ENCODE measurements at regions of chr20 and their contacts with region 1.

Region 1: DNA sequence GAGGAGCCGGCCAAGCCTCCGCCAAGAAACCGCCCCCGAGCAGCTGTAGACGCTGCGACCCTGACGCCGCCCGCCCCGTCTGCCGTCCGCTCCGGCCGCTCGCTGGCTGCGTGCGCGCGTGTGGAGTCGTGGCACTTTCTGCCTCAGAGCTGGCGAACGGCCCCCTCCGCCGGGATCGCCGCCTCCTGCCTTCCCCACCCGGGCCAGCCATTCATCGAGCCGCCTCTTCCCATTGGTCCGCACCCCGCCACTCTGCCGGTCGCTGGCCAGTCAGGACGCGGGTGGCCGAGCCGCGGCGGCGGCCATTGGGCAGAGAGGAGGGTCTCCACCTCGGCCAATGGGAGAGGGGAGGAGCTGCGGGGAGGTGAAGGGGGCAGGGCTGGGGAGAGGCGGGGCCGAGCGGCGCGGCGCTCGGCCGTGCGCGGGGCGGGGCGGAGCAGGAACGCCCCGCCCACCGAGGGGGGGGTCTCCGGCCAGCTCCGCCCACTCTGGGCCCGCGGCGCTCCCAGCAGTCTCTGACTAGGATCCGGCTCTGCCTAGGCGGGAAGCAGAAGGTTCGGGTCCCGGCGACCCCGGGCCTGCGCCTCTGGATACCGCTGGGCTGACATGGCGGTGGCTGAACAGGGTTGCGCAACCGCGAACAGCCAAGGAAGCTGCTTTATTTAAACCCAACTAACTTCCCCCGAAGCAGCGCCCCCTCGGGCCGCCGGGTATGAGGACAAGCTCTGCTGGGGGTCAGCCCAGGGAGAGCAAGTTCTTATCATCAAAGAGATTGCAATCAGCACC is at the start of gene RRBP1:
- DNase-seq: peak; percentile 97
- H3K4me3 Mint-ChIP-seq: peak within 1 kb of the TSS; percentile 81
- H3K27ac Mint-ChIP-seq: peak within 1 kb of the TSS; percentile 47
- H3K4me1 Mint-ChIP-seq: peaks cover 15% of the 10 kb centered on the region
- H3K27me3 Mint-ChIP-seq: peaks cover 19% of the 10 kb centered on the region
- total RNA-seq, gene RRBP1: 19.6 to 20.0 TPM

Region 2: GRCh38 chr20:17377231-17377630 is 305.1 kb before region 1 on chr20:
- CTCF ChIA-PET with region 1: no interaction called
- intact Hi-C with region 1: no loop called
- DNase-seq: no peak
- H3K4me3 Mint-ChIP-seq: no peak overlapping the region
- H3K27ac Mint-ChIP-seq: no peak overlapping the region
- H3K4me1 Mint-ChIP-seq: no peaks in the 10 kb centered on the region
- H3K27me3 Mint-ChIP-seq: no peaks in the 10 kb centered on the region

Region 3: DNA sequence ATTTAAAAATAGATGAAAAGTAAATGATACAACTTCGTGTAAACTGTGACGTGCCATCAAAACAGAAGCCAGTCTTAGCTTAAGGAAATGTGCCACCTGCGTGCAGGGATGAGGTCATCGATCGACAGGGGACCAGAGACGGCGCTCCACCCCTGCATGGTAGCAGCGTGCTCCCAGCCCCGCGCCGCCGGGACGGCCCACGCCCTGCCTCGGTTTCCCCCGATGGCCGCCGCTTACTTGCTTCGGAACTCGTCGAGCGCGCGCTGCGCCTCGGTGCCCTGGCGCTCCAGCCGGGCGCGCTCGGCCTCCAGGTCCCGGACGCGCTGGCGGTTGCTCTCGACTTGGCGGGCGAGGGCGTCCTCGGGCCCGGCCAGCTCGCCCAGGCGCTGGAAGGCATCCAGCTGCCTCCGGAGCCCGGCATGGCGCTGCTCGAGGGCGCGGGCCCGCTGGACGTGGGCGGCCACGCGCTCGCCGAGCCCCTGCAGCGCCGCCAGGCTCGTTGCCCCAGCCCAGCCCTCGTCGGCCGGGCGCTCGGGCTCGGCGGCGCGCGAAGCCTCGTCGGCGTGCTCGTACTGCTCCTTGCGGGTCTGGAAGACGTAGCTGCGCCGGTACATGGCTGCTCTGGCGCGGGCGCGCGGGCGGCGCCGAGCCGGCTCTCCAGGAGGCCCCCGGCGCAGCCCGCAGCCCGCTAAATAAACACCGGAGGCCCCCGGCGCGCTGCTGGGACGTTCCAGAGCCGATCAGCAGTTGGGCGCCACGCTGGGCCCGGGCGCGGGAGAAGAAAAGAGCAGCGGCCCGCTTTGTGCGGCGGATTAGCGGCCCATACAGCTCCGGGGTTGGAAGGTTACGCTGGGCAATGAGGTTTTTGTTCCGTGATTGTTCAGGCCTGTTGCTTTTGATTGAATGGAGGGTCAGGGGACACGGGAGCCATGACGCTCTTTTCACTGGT is 151.3 kb before region 1 on chr20 and contains the start of gene BFSP1:
- CTCF ChIA-PET with region 1: interaction called, 6 read pairs
- intact Hi-C with region 1: loop called (anchors 2 kb)
- DNase-seq: peak; percentile 69
- H3K4me3 Mint-ChIP-seq: peak within 1 kb of the TSS; percentile 85
- H3K27ac Mint-ChIP-seq: no peak within 1 kb of the TSS
- H3K4me1 Mint-ChIP-seq: peaks cover 9% of the 10 kb centered on the region
- H3K27me3 Mint-ChIP-seq: peaks cover 17% of the 10 kb centered on the region
- total RNA-seq, gene BFSP1: 0.19 TPM in 1 of 2 experiments, not detected in the other

Region 4: DNA sequence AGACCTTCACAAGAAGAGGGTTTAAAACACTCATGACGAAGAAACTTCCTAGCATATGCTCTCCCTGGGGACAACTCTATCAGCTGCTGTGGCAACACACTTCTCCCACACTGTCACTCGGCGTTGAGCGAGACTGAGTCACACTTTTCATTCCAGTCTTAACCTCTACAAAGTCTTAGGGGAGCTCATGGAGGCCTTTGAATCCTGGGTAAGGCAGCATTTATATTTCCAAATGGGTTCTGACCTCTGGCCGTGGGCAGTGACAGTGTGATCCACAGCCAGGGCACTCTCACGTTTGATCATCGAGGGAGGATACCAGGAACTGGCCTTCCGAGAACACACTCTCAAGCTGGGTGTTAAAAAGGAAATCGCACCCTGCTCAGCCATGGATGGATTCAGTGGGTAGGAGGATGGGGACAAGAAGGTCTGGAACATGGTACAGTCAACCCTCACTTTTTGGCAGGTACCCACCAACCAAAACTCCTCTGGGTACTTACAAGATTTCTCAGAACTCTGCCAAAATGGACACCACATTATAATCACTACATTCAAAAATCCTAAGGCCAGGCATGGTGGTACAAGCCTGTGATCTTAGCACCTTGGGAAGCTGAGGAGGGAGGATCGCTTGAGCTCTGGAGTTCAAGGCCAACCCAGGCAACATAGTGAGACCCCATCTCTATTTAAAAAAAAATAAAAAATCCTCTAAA is 19.8 kb before region 1 on chr20:
- CTCF ChIA-PET with region 1: interaction called, 10 read pairs
- intact Hi-C with region 1: no loop called
- DNase-seq: no peak
- H3K4me3 Mint-ChIP-seq: no peak overlapping the region
- H3K27ac Mint-ChIP-seq: peak overlapping the region; percentile 47
- H3K4me1 Mint-ChIP-seq: peaks cover 34% of the 10 kb centered on the region
- H3K27me3 Mint-ChIP-seq: no peaks in the 10 kb centered on the region

Region 5: GRCh38 chr20:18137412-18138265 is 455.3 kb after region 1 on chr20 and contains the starts of genes KAT14 and PET117:
- CTCF ChIA-PET with region 1: no interaction called
- intact Hi-C with region 1: loop called (anchors 1 kb)
- DNase-seq: peak; percentile 91
- H3K4me3 Mint-ChIP-seq: peak within 1 kb of the TSS; percentile 75
- H3K27ac Mint-ChIP-seq: peak within 1 kb of the TSS; percentile 77
- H3K4me1 Mint-ChIP-seq: peaks cover 30% of the 10 kb centered on the region
- H3K27me3 Mint-ChIP-seq: no peaks in the 10 kb centered on the region
- total RNA-seq, gene KAT14: 10.3 to 12.9 TPM
- total RNA-seq, gene PET117: 16.7 to 17.9 TPM

Region 6: GRCh38 chr20:18566892-18567742 is 884.8 kb after region 1 on chr20 and contains the start of gene SMIM26:
- CTCF ChIA-PET with region 1: no interaction called
- intact Hi-C with region 1: loop called (anchors 5 kb)
- DNase-seq: peak; percentile 95
- H3K4me3 Mint-ChIP-seq: peak within 1 kb of the TSS; percentile 94
- H3K27ac Mint-ChIP-seq: peak within 1 kb of the TSS; percentile 95
- H3K4me1 Mint-ChIP-seq: peaks cover 19% of the 10 kb centered on the region
- H3K27me3 Mint-ChIP-seq: no peaks in the 10 kb centered on the region
- total RNA-seq, gene SMIM26: 57.3 to 60.0 TPM

Measured in activated naive CD4-positive, alpha-beta T cell treated with anti-CD3 and anti-CD28 coated beads for 36 hours (primary cell).